Activated naive CD4-positive, alpha-beta T cell treated with anti-CD3 and anti-CD28 coated beads for 36 hours (primary cell): ENCODE measurements at regions of chr14 and their contacts with region 1.

Region 1: GRCh38 chr14:35416108-35416750 is 11.7 kb upstream of the NFKBIA start:
- DNase-seq: peak; percentile 89
- H3K4me3 Mint-ChIP-seq: peak overlapping the region; percentile 59
- H3K27ac Mint-ChIP-seq: peak overlapping the region; percentile 91
- H3K4me1 Mint-ChIP-seq: peaks cover 47% of the 10 kb centered on the region
- H3K27me3 Mint-ChIP-seq: no peaks in the 10 kb centered on the region

Region 2: DNA sequence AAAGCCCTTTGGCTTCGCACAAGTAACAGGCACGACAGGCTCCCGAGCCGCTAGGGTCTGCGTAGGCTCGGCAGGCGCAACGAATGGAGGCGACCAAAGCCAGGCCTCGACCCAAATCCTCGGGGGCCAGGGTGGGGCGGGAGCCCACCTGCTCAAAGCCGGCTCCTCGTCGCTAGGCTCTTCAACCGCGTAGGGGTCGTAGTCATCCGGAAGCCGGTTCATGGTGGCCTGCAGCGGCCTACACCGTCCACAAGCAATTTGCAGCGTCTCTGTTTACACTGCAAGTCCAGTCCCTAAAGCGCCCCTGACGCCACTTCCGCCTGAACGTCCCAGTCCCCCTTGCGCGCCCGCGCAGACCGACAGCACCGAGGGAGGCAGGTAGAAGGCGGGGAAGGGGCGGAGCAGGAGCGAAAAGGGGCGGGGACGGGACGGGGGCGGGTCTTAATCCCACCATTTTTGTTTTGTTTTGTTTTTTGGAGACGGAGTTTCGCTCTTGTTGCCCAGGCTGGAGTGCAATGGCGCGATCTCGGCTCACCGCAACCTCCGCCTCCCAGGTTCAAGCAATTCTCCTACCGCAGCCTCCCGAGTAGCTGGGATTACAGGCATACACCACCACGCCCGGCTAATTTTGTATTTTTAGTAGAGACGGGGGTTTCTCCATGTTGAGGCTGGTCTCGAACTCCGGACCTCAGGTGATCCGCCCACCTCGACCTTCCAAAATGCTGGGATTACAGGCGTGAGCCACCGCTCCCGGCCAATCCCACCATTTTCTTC is 876.6 kb before region 1 on chr14 and contains the start of gene EAPP:
- CTCF ChIA-PET with region 1: no interaction called
- intact Hi-C with region 1: loop called (anchors 5 kb)
- DNase-seq: peak; percentile 98
- H3K4me3 Mint-ChIP-seq: peak within 1 kb of the TSS; percentile 95
- H3K27ac Mint-ChIP-seq: peak within 1 kb of the TSS; percentile 98
- H3K4me1 Mint-ChIP-seq: peaks cover 32% of the 10 kb centered on the region
- H3K27me3 Mint-ChIP-seq: no peaks in the 10 kb centered on the region
- total RNA-seq, gene EAPP: 34.0 to 35.4 TPM

Region 3: GRCh38 chr14:34873591-34874385 is 542.4 kb before region 1 on chr14:
- CTCF ChIA-PET with region 1: no interaction called
- intact Hi-C with region 1: loop called (anchors 1 kb)
- DNase-seq: peak; percentile 95
- H3K4me3 Mint-ChIP-seq: peak overlapping the region; percentile 89
- H3K27ac Mint-ChIP-seq: peak overlapping the region; percentile 98
- H3K4me1 Mint-ChIP-seq: peaks cover 35% of the 10 kb centered on the region
- H3K27me3 Mint-ChIP-seq: no peaks in the 10 kb centered on the region

Region 4: DNA sequence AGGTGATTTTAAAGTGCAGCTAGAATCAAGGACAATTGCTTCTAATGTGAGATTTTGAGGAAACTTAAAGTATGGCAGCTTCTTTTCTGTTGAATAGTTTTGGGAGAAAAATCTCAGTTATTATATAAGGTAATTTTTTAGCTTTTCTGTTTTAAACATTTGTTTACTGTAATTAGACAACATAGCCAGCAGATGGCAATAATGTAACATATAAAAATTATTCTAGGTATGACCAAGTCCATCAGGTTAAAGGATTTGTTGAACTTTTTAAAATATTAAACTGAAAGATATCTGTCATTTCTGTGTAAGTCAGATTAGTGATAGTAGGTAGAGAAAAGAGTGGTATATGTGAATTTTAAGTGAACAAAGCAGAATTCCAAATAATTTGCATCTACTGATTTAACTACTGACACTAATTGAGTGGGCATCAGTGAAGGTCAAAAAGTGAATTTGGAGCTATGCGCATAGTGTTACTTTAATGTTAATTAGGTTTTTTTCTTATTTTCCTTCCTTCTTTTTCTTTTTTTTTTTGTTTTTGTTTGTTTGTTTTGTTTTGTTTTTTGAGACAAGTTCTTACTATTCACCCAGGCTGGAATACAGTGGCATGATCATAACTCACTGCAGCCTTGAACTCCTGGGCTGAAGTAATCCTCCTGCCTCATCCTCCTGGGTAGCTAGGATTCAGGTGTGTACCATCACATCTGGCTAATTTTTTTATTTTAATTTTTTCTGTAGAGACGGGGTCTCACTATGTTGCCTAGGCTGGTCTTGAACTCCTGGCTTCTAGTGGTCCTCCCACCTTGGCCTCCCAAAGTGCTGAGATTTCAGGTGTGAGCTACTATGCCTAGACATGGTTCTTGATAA is 275.3 kb before region 1 on chr14:
- CTCF ChIA-PET with region 1: interaction called, 66 read pairs
- intact Hi-C with region 1: loop called (anchors 1 kb)
- DNase-seq: no peak
- H3K4me3 Mint-ChIP-seq: no peak overlapping the region
- H3K27ac Mint-ChIP-seq: no peak overlapping the region
- H3K4me1 Mint-ChIP-seq: peaks cover 8% of the 10 kb centered on the region
- H3K27me3 Mint-ChIP-seq: no peaks in the 10 kb centered on the region

Region 5: DNA sequence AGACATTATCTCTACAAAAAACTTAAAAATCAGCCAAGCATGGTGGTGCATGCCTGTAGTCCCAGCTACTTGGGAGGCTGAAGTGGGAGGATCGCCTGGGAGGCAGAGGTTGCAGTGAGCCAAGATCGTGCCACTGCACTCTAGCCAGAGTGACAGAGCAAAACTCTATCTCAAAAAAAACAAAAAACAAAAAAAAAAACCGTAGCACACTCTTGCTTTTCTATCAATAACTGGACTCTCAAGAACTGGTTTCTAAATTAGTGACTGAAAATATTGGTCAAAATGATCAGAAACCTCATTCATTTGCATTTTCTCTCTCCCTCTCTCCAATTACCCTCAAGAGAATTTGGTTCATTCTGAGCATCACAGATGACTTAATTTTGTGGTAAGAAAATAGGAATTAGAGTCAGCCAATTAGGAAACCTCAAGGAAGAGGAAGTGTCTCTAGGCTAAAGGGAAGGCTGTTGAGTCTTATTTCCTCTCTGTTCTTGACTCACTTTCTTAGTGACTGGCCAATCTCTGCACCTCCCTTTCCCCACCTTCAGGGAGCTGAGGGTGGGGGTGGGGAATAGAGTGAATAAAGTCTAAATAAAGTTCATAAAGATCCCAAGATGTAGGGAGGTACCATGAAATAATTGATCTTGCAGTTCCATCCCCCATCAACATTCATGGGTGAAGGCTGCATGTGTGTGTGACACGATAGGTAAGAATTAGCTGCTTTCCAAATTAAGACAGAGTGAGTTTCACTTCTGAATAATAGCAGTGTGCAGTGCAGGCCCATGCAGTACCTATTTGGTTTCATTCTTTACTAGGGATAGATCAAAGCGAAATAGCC is 130.8 kb before region 1 on chr14:
- CTCF ChIA-PET with region 1: interaction called, 8 read pairs
- intact Hi-C with region 1: loop called (anchors 1 kb)
- DNase-seq: peak; percentile 47
- H3K4me3 Mint-ChIP-seq: peak overlapping the region; percentile 35
- H3K27ac Mint-ChIP-seq: peak overlapping the region; percentile 96
- H3K4me1 Mint-ChIP-seq: peaks cover 55% of the 10 kb centered on the region
- H3K27me3 Mint-ChIP-seq: no peaks in the 10 kb centered on the region

Region 6: GRCh38 chr14:35326096-35326774 is 90.0 kb before region 1 on chr14:
- CTCF ChIA-PET with region 1: no interaction called
- intact Hi-C with region 1: no loop called
- DNase-seq: no peak
- H3K4me3 Mint-ChIP-seq: no peak overlapping the region
- H3K27ac Mint-ChIP-seq: no peak overlapping the region
- H3K4me1 Mint-ChIP-seq: no peaks in the 10 kb centered on the region
- H3K27me3 Mint-ChIP-seq: no peaks in the 10 kb centered on the region

Region 7: GRCh38 chr14:35404449-35405303 is 11.6 kb before region 1 on chr14 and contains the start of gene NFKBIA:
- CTCF ChIA-PET with region 1: interaction called, 25 read pairs
- intact Hi-C with region 1: loop called (anchors 1 kb)
- DNase-seq: peak; percentile 96
- H3K4me3 Mint-ChIP-seq: peak within 1 kb of the TSS; percentile 98
- H3K27ac Mint-ChIP-seq: peak within 1 kb of the TSS; percentile 99
- H3K4me1 Mint-ChIP-seq: peaks cover 31% of the 10 kb centered on the region
- H3K27me3 Mint-ChIP-seq: no peaks in the 10 kb centered on the region
- total RNA-seq, gene NFKBIA: 289 to 293 TPM

Region 8: GRCh38 chr14:35704793-35705493 is 288.7 kb after region 1 on chr14:
- CTCF ChIA-PET with region 1: no interaction called
- intact Hi-C with region 1: no loop called
- DNase-seq: peak; percentile 12
- H3K4me3 Mint-ChIP-seq: no peak overlapping the region
- H3K27ac Mint-ChIP-seq: no peak overlapping the region
- H3K4me1 Mint-ChIP-seq: peaks cover 6% of the 10 kb centered on the region
- H3K27me3 Mint-ChIP-seq: no peaks in the 10 kb centered on the region

Region 9: DNA sequence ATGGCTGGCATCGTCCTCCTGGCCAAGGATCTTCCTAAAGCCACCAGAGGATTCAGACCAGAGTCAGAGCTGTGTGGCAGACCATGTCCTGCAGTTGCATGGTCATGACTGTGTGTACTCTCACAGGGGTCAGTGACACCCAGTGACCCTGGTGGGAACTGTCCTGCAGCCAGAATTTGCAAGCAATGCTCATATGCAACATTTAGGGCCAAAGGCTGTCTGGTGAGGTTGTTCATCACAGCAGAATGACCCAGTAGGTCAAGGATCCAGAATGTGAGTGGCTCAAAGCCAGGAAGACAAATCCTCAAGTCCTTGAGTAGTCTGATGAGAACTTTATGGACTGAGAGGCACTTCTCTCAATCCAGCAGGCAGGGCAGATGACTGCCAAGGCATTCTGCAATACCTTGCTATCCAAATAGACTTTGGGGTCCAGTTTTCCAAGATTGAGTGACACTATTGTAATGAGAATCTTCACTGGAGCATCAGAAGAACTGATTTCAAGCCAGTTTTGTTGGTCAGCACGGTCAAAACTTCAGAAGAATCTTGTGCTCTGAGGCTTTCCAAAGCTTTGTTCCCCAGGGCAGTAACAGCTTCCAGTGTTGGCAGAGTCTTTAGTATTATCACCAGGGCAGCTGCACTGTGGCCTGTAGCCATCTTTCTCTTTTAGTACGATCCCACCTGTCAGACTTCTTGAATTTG is 638.3 kb after region 1 on chr14:
- CTCF ChIA-PET with region 1: no interaction called
- intact Hi-C with region 1: no loop called
- DNase-seq: no peak
- H3K4me3 Mint-ChIP-seq: no peak overlapping the region
- H3K27ac Mint-ChIP-seq: no peak overlapping the region
- H3K4me1 Mint-ChIP-seq: no peaks in the 10 kb centered on the region
- H3K27me3 Mint-ChIP-seq: peaks cover 7% of the 10 kb centered on the region

Region 10: GRCh38 chr14:36271939-36272907 is 856.0 kb after region 1 on chr14:
- CTCF ChIA-PET with region 1: no interaction called
- intact Hi-C with region 1: no loop called
- DNase-seq: peak; percentile 61
- H3K4me3 Mint-ChIP-seq: peak overlapping the region; percentile 69
- H3K27ac Mint-ChIP-seq: no peak overlapping the region
- H3K4me1 Mint-ChIP-seq: peaks cover 18% of the 10 kb centered on the region
- H3K27me3 Mint-ChIP-seq: peaks cover 49% of the 10 kb centered on the region

Region 11: DNA sequence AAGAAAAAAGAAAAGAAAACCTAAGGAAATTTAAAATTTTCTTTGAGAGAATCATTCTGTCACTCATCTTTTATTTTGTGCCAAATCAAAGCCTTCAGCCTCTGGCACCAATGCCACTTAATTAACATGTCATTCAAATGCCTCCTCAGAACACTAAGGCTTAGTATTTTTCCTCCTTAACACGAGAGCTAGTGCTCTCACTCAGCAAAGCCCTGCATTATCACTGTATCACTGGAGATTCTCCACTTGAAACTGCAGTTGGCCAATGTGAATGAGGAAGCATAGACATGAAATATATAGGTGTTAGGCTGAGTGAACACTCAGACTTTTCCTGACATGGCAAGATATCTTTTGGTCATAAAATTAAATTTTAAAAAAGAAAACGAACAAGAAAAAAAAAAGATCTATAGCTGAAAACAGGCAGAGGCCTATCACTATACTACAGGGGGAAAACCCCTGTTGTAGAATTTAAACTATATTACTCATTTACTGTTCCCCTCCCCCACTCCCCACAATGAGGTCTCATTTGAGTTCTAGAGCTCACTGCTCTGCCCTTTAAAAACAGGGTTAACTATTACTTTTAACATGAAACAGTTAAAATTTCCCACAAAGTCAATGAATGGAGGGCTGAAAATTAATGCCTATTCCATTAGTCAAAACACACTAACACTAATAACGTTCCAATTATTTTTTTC is 899.1 kb after region 1 on chr14:
- CTCF ChIA-PET with region 1: no interaction called
- intact Hi-C with region 1: loop called (anchors 5 kb)
- DNase-seq: peak; percentile 80
- H3K4me3 Mint-ChIP-seq: peak overlapping the region; percentile 43
- H3K27ac Mint-ChIP-seq: peak overlapping the region; percentile 89
- H3K4me1 Mint-ChIP-seq: peaks cover 40% of the 10 kb centered on the region
- H3K27me3 Mint-ChIP-seq: no peaks in the 10 kb centered on the region